ENCODE measurements at regions of chr3 and their contacts with region 1.

Region 1: DNA sequence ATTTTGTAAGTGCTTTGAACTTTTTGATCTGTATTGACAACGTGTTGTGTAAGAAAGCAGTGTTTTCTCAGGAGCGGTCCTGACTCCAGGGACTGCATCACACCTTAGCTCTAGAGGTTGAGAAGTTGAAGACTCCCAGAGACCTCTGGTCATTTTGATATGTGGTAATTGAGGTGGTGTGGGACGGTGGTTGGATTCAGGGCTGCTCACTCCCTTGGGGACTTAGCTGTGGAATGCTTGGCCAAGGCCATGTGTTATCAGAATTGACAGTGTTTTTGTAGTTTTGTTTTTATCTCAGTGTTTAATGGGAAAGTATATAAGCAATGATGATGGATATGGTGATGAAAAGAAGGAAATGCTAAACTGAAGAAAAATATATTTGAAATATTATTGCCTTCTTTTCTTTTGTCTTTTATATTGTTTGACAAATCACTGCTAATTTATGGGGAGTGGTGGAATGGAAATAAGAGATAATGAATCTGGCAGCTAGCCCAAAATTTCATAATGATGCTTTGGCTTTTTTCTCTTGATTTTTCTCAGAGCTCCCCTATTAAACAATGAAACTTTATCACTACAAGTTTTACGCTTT is 16.0 kb downstream of the CMSS1 start:
- DNase-seq: no peak
- ATAC-seq: no peak
- H3K4me3 Mint-ChIP-seq: no peak overlapping the region
- H3K27ac Mint-ChIP-seq: no peak overlapping the region
- H3K4me1 Mint-ChIP-seq: no peaks in the 10 kb centered on the region
- H3K27me3 Mint-ChIP-seq: no peaks in the 10 kb centered on the region
- CTCF ChIP-seq: no peak

Region 2: GRCh38 chr3:99562138-99562537 is 271.6 kb before region 1 on chr3:
- CTCF ChIA-PET with region 1: no interaction called
- POLR2A ChIA-PET with region 1: no interaction called
- intact Hi-C with region 1: no loop called
- DNase-seq: no peak
- ATAC-seq: no peak
- H3K4me3 Mint-ChIP-seq: no peak overlapping the region
- H3K27ac Mint-ChIP-seq: no peak overlapping the region
- H3K4me1 Mint-ChIP-seq: no peaks in the 10 kb centered on the region
- H3K27me3 Mint-ChIP-seq: no peaks in the 10 kb centered on the region
- CTCF ChIP-seq: no peak

Region 3: GRCh38 chr3:99638167-99638948 is 195.4 kb before region 1 on chr3 and contains the start of gene COL8A1:
- CTCF ChIA-PET with region 1: no interaction called
- POLR2A ChIA-PET with region 1: no interaction called
- intact Hi-C with region 1: no loop called
- DNase-seq: no peak
- ATAC-seq: no peak
- H3K4me3 Mint-ChIP-seq: no peak within 1 kb of the TSS
- H3K27ac Mint-ChIP-seq: no peak within 1 kb of the TSS
- H3K4me1 Mint-ChIP-seq: peaks cover 3% of the 10 kb centered on the region
- H3K27me3 Mint-ChIP-seq: peaks cover 45% of the 10 kb centered on the region
- CTCF ChIP-seq: no peak
- total RNA-seq, gene COL8A1: 0.09 and 0.20 TPM in 2 replicates

Region 4: GRCh38 chr3:99774467-99774866 is 59.2 kb before region 1 on chr3:
- CTCF ChIA-PET with region 1: no interaction called
- POLR2A ChIA-PET with region 1: no interaction called
- intact Hi-C with region 1: no loop called
- DNase-seq: no peak
- ATAC-seq: no peak
- H3K4me3 Mint-ChIP-seq: no peak overlapping the region
- H3K27ac Mint-ChIP-seq: no peak overlapping the region
- H3K4me1 Mint-ChIP-seq: no peaks in the 10 kb centered on the region
- H3K27me3 Mint-ChIP-seq: peaks cover 15% of the 10 kb centered on the region
- CTCF ChIP-seq: no peak

Region 5: DNA sequence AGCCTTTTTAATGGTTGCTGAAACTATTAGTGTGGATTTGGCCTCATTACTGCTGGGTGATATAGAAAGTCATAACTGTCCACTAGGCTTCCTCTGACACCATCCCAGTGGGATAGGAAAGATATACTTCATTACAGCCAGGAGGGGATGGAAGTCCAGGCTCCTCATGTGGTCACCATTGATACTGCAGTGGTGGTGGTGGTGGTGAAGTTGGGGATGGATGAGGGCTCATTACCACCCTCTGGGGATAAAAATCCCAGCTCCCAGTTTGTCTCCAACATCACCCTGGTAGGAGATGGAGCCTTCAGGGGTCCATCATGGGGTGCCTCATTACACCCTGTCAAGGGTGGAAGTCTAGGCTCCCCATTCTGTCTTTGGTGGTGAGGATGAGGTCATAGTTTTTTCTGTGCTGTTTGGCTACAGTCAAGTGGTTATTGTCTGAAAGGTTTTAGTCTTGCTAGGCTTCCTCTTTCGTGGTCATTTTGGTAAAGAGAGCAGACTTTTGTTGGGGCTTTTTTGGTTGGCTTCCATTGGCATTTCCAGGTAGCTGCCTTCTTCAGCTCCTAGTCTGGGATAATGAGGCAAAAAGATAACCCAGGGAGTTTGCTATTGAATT is 310.6 kb after region 1 on chr3:
- CTCF ChIA-PET with region 1: no interaction called
- POLR2A ChIA-PET with region 1: no interaction called
- intact Hi-C with region 1: no loop called
- DNase-seq: no peak
- ATAC-seq: no peak
- H3K4me3 Mint-ChIP-seq: no peak overlapping the region
- H3K27ac Mint-ChIP-seq: no peak overlapping the region
- H3K4me1 Mint-ChIP-seq: peaks cover 7% of the 10 kb centered on the region
- H3K27me3 Mint-ChIP-seq: no peaks in the 10 kb centered on the region
- CTCF ChIP-seq: no peak

Region 6: GRCh38 chr3:100316641-100317069 is 482.9 kb after region 1 on chr3:
- CTCF ChIA-PET with region 1: interaction called, 11 read pairs
- POLR2A ChIA-PET with region 1: no interaction called
- intact Hi-C with region 1: loop called (anchors 1 kb)
- DNase-seq: no peak
- ATAC-seq: peak; percentile 68
- H3K4me3 Mint-ChIP-seq: no peak overlapping the region
- H3K27ac Mint-ChIP-seq: no peak overlapping the region
- H3K4me1 Mint-ChIP-seq: peaks cover 2% of the 10 kb centered on the region
- H3K27me3 Mint-ChIP-seq: no peaks in the 10 kb centered on the region
- CTCF ChIP-seq: no peak

Measured in activated B cell treated with CpG ODN at 0.5 μM for 24 hours (primary cell).